ENCODE measurements at regions of chr20 and their contacts with region 1.

Region 1: GRCh38 chr20:25539742-25540672 is 45.3 kb downstream of the NINL start:
- DNase-seq: no peak
- H3K4me3 ChIP-seq: no peak overlapping the region
- H3K27ac ChIP-seq: no peak overlapping the region
- H3K4me1 ChIP-seq: no peaks in the 10 kb centered on the region
- CTCF ChIP-seq: peak; percentile 26; the same call in 1 of the 2 replicates

Region 2: GRCh38 chr20:25551413-25552215 is 11.6 kb after region 1 on chr20:
- CTCF ChIA-PET with region 1: no interaction called
- POLR2A ChIA-PET with region 1: interaction called, 10 read pairs
- intact Hi-C with region 1: no loop called
- DNase-seq: no peak
- H3K4me3 ChIP-seq: no peak overlapping the region
- H3K27ac ChIP-seq: no peak overlapping the region
- H3K4me1 ChIP-seq: no peaks in the 10 kb centered on the region
- CTCF ChIP-seq: no peak

Region 3: DNA sequence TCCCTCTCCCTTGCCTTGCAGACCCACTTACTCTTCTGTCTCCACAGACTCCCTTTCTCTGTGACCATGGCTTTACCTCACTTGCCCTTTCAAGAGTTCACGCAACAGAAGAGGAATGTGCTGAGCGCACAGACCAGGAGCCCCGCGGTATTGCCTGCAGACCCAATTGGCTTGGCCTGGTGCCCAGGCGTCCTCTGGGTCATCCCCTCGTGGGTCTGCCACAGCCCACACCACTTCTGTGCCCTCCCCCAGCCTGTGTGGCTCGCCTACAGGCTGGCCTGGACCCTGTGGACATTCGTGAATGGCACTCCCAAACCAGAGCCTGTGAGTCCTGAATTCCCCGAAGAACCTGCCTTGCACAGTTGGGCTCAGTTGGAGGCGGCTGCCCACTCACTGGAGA is 60.6 kb after region 1 on chr20:
- CTCF ChIA-PET with region 1: no interaction called
- POLR2A ChIA-PET with region 1: no interaction called
- intact Hi-C with region 1: loop called (anchors 10 kb)
- DNase-seq: no peak
- H3K4me3 ChIP-seq: no peak overlapping the region
- H3K27ac ChIP-seq: no peak overlapping the region
- H3K4me1 ChIP-seq: no peaks in the 10 kb centered on the region
- CTCF ChIP-seq: no peak

Measured in OCI-LY7 (cell line).